ENCODE measurements at regions of chr20 and their contacts with region 1.

Region 1: GRCh38 chr20:22586645-22587310 is 2.4 kb upstream of the FOXA2 start:
- H3K4me3 ChIP-seq: peak overlapping the region; percentile 22
- H3K27ac ChIP-seq: peak overlapping the region; percentile 31; the same call in 1 of the 2 replicates
- H3K4me1 ChIP-seq: 0 out of 2 replicates have a peak, but pooled peaks cover 2% of the 10 kb centered on the region
- CTCF ChIP-seq: peak; percentile 80

Region 2: DNA sequence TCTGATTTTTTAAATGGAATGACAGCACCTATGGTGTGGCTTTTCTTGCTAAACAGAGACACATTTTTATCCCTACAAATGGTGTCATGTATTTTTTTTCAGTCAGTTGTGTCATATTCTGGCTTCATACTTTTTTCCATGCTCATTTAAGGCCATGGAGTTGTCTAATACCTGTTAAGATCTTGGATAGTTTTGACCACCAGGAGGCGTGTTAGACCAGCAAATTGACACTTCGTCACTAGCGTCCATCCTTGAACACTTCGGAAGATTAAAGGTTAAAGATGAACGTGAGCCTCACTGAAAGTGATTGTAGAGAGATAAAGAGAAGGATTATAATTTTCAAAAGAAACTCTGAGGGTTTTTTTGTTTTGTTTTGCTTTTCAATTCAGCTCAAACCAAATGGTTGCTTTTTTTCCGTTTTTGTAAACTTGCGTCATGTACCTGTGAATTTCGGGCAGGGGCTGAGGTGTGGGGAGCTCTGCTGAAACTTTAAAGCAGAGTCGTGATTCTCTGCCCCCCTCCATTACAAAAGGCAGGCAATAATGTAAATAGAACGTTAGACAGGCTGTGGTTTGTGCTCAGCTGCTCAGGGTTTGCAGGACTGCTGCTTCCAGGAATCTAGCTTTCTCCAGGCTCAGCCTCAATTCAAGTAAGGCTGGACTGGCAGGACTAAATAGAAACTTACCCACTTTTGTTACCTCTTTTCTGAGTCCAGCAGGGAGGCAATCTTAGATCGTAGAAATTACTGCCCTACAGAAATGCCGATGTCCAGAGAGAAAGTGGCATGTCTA is 247.5 kb before region 1 on chr20:
- CTCF ChIA-PET with region 1: interaction called, 109 read pairs
- POLR2A ChIA-PET with region 1: no interaction called
- H3K4me3 ChIP-seq: no peak overlapping the region
- H3K27ac ChIP-seq: no peak overlapping the region
- H3K4me1 ChIP-seq: no peaks in the 10 kb centered on the region
- CTCF ChIP-seq: 0 out of 2 replicates have a peak, but pooled peaks have one; percentile 56

Region 3: GRCh38 chr20:22453239-22454080 is 133.3 kb before region 1 on chr20:
- CTCF ChIA-PET with region 1: interaction called, 38 read pairs
- POLR2A ChIA-PET with region 1: no interaction called
- H3K4me3 ChIP-seq: no peak overlapping the region
- H3K27ac ChIP-seq: no peak overlapping the region
- H3K4me1 ChIP-seq: no peaks in the 10 kb centered on the region
- CTCF ChIP-seq: no peak

Region 4: GRCh38 chr20:22601361-22602141 is 14.8 kb after region 1 on chr20:
- CTCF ChIA-PET with region 1: interaction called, 41 read pairs
- POLR2A ChIA-PET with region 1: no interaction called
- H3K4me3 ChIP-seq: no peak overlapping the region
- H3K27ac ChIP-seq: no peak overlapping the region
- H3K4me1 ChIP-seq: no peaks in the 10 kb centered on the region
- CTCF ChIP-seq: no peak

Region 5: GRCh38 chr20:22672191-22672590 is 85.4 kb after region 1 on chr20:
- CTCF ChIA-PET with region 1: no interaction called
- POLR2A ChIA-PET with region 1: no interaction called
- H3K4me3 ChIP-seq: no peak overlapping the region
- H3K27ac ChIP-seq: no peak overlapping the region
- H3K4me1 ChIP-seq: no peaks in the 10 kb centered on the region
- CTCF ChIP-seq: no peak